Activated B cell treated with CpG ODN at 0.5 μM for 24 hours (primary cell): ENCODE measurements at regions of chr6 and their contacts with region 1.

Region 1: DNA sequence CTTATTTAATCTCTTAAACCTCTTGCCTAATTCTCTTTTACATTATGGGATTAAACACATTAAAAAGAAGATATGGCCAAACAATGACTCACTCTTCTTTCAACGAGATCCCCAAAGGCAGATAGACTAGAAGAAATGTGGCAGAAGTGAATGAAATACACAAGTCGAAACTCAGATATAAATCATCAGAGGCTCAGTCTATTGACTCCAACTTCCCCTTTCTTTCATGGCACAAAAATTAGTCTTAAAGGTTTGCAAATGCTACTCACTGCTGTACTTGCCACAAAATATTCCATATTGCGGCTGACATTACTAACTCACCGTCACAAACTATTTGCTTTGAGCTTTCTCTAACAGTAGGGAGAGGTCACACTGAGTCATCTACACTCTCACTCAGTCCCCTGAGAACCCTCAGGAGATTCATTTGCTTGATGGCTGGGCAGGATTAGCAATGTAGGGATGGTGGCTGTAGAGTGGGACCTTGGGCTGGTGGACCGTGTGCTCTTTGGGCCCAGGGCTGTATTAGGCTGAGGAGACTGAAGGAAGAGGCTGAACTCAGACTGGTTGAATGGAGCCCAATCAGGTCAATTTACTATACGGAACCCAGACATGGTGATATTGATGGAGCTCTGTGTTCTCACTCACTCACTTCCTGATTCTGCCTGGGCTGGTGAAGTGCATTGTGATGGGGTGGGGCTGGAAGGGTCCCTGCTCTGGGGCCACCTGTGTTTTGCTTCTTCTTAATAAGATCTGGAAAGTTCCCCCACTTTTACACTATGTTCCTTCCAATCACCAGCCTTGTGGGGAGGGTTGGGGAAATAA is 42.8 kb upstream of the UBR2 start:
- DNase-seq: no peak
- ATAC-seq: peak; percentile 92
- H3K4me3 Mint-ChIP-seq: peak overlapping the region; percentile 71
- H3K27ac Mint-ChIP-seq: peak overlapping the region; percentile 99
- H3K4me1 Mint-ChIP-seq: peaks cover 22% of the 10 kb centered on the region
- H3K27me3 Mint-ChIP-seq: no peaks in the 10 kb centered on the region
- CTCF ChIP-seq: no peak

Region 2: GRCh38 chr6:42505377-42505702 is 15.7 kb before region 1 on chr6:
- CTCF ChIA-PET with region 1: interaction called, 3 read pairs
- POLR2A ChIA-PET with region 1: interaction called, 21 read pairs
- intact Hi-C with region 1: loop called (anchors 1 kb)
- DNase-seq: no peak
- ATAC-seq: peak; percentile 41
- H3K4me3 Mint-ChIP-seq: no peak overlapping the region
- H3K27ac Mint-ChIP-seq: peak overlapping the region; percentile 35
- H3K4me1 Mint-ChIP-seq: peaks cover 29% of the 10 kb centered on the region
- H3K27me3 Mint-ChIP-seq: no peaks in the 10 kb centered on the region
- CTCF ChIP-seq: no peak

Region 3: GRCh38 chr6:42727087-42727611 is 206.2 kb after region 1 on chr6:
- CTCF ChIA-PET with region 1: no interaction called
- POLR2A ChIA-PET with region 1: no interaction called
- intact Hi-C with region 1: no loop called
- DNase-seq: peak; percentile 40
- ATAC-seq: no peak
- H3K4me3 Mint-ChIP-seq: peak overlapping the region; percentile 89
- H3K27ac Mint-ChIP-seq: peak overlapping the region; percentile 96
- H3K4me1 Mint-ChIP-seq: peaks cover 19% of the 10 kb centered on the region
- H3K27me3 Mint-ChIP-seq: no peaks in the 10 kb centered on the region
- CTCF ChIP-seq: no peak